Mammary epithelial cell (primary cell): ENCODE measurements at regions of chr1 and their contacts with region 1.

Region 1: DNA sequence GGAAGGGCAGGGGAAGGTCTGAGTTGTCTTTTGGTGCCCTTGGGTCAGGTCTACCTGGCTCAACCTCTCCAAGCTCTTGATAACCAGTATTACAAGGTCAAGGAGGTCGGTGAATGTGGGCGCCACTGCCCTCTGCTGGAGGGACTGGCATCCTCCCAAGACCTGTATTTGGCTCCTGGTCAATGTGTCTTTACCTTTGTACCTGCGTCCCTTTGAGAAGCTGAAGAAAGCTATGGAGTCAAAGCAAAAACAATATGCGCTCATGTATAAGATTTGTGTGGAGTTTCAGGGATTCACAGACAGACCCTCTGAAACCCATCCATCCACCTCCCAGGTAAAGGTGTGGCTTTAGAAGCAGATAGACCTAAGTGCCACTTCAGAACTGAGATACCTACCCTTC is 61.8 kb upstream of the NBL1 start:
- DNase-seq: peak; percentile 42
- H3K4me3 ChIP-seq: no peak overlapping the region
- H3K27ac ChIP-seq: no peak overlapping the region
- H3K4me1 ChIP-seq: no peaks in the 10 kb centered on the region
- H3K27me3 ChIP-seq: no peaks in the 10 kb centered on the region
- CTCF ChIP-seq: peak; percentile 81 to 83

Region 2: DNA sequence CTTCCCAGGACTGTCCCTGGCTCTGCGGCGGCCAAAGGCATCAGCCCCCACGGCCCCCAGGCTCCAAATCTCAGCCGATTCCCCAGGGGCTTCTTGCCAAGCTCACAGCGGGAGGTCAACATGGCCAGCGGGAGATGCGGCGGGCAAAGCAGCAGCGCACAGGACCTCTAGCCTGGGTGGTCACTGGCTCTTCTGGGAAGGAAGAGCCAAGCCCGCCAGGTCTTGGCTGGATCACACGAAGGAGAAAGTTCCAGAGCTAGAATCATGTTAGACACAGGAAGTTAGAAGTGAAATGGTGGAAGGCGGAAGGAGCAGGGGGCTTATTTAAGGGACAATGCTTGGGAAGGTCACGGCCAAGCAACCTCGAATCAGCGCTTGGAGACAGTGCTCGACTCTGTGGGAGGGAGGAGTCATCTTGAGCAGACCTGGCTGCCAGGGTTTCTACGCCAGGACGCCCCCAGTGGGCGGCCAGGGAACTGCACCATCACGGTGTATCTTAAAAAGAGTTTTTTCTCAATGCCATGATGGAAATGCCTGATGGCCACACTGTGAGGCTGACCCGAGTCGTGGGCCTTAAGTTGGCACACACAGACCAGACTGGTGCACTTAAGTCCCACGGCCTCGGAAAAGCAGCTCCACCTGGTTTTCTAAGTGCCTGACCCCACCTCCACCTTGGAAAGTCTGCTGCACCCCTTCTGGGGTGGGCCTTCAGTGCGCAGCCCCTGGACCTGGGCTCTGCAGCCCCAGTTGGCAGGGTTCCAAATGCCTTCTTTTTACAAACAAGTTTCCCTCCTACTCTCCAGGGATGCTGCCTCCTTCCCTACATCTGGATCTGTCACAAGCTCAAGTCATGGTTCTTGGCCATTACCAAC is 240.9 kb before region 1 on chr1:
- CTCF ChIA-PET with region 1: no interaction called
- dilution Hi-C with region 1: no loop called
- in situ Hi-C with region 1: no loop called
- intact Hi-C with region 1: loop called (anchors 1 kb)
- DNase-seq: peak; percentile 59
- H3K4me3 ChIP-seq: no peak overlapping the region
- H3K27ac ChIP-seq: no peak overlapping the region
- H3K4me1 ChIP-seq: peaks cover 8% of the 10 kb centered on the region
- H3K27me3 ChIP-seq: no peaks in the 10 kb centered on the region
- CTCF ChIP-seq: peak; percentile 89 to 90

Region 3: GRCh38 chr1:19361611-19362147 is 220.6 kb before region 1 on chr1:
- CTCF ChIA-PET with region 1: no interaction called
- dilution Hi-C with region 1: no loop called
- in situ Hi-C with region 1: loop called in 1 of 2 experiments (anchors 10 kb)
- intact Hi-C with region 1: no loop called
- DNase-seq: peak; percentile 58
- H3K4me3 ChIP-seq: no peak overlapping the region
- H3K27ac ChIP-seq: peak overlapping the region; percentile 67
- H3K4me1 ChIP-seq: peaks cover 58% of the 10 kb centered on the region
- H3K27me3 ChIP-seq: no peaks in the 10 kb centered on the region
- CTCF ChIP-seq: no peak

Region 4: GRCh38 chr1:19390901-19391595 is 191.3 kb before region 1 on chr1:
- CTCF ChIA-PET with region 1: no interaction called
- dilution Hi-C with region 1: no loop called
- in situ Hi-C with region 1: no loop called
- intact Hi-C with region 1: loop called (anchors 1 kb)
- DNase-seq: peak; percentile 25
- H3K4me3 ChIP-seq: no peak overlapping the region
- H3K27ac ChIP-seq: peak overlapping the region; percentile 4
- H3K4me1 ChIP-seq: peaks cover 34% of the 10 kb centered on the region
- H3K27me3 ChIP-seq: no peaks in the 10 kb centered on the region
- CTCF ChIP-seq: peak; percentile 82

Region 5: DNA sequence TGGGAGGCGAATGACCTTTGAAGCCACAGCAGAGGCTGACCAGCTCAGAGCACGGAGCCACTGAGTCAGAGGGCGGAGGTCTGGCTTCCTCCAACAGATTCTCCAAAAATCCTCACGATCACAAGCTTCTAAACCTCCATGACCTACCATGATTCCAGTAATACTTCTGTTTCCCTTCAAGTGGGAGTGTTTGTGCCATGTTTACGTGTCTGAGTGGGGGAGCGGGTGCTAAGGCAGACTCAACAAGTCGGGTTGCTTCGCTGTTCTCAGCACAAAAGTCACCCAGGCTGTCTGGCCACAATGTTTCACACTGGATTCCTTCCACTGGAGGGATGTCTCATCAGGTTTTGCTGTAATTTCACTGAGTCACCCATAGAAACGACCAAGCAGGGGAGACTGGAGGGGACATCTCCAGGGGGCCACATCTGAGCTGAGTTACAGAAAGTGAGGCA is 184.0 kb before region 1 on chr1:
- CTCF ChIA-PET with region 1: no interaction called
- dilution Hi-C with region 1: no loop called
- in situ Hi-C with region 1: no loop called
- intact Hi-C with region 1: loop called (anchors 1 kb)
- DNase-seq: peak; percentile 45
- H3K4me3 ChIP-seq: no peak overlapping the region
- H3K27ac ChIP-seq: no peak overlapping the region
- H3K4me1 ChIP-seq: peaks cover 17% of the 10 kb centered on the region
- H3K27me3 ChIP-seq: no peaks in the 10 kb centered on the region
- CTCF ChIP-seq: peak; percentile 21 to 30

Region 6: GRCh38 chr1:19439464-19440171 is 142.7 kb before region 1 on chr1:
- CTCF ChIA-PET with region 1: no interaction called
- dilution Hi-C with region 1: no loop called
- in situ Hi-C with region 1: no loop called
- intact Hi-C with region 1: loop called (anchors 2 kb)
- DNase-seq: no peak
- H3K4me3 ChIP-seq: no peak overlapping the region
- H3K27ac ChIP-seq: peak overlapping the region; percentile 59
- H3K4me1 ChIP-seq: peaks cover 63% of the 10 kb centered on the region
- H3K27me3 ChIP-seq: no peaks in the 10 kb centered on the region
- CTCF ChIP-seq: peak in 1 of 2 donors; percentile 27

Region 7: DNA sequence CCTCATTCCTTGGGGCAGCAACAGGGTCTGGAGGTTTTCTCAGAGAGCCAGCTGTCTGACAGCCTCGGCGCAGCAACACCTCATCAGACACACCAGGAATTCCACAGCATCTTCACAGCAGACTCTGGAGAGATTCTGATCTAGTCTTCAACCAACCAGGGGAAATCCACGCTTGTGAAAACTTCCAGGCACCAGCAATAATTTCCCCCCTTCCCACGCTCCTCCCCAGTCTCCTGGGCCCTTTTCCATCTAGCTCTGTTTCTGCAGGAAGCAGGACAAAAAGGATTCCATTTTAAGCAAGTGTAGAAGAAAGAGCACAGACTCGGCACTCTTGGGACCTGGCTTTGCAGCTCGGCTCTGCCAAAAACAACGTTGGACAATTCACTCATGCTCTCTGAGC is 52.6 kb before region 1 on chr1:
- CTCF ChIA-PET with region 1: no interaction called
- dilution Hi-C with region 1: loop called (anchors 5 kb)
- in situ Hi-C with region 1: no loop called
- intact Hi-C with region 1: no loop called
- DNase-seq: no peak
- H3K4me3 ChIP-seq: no peak overlapping the region
- H3K27ac ChIP-seq: no peak overlapping the region
- H3K4me1 ChIP-seq: no peaks in the 10 kb centered on the region
- H3K27me3 ChIP-seq: no peaks in the 10 kb centered on the region
- CTCF ChIP-seq: no peak